ENCODE measurements at regions of chr14 and their contacts with region 1.

Region 1: GRCh38 chr14:88189417-88190191 is 133.5 kb downstream of the KCNK10 start:
- DNase-seq: peak; percentile 41
- H3K4me3 ChIP-seq: no peak overlapping the region
- H3K27me3 ChIP-seq: no peaks in the 10 kb centered on the region
- CTCF ChIP-seq: peak; percentile 76

Region 2: DNA sequence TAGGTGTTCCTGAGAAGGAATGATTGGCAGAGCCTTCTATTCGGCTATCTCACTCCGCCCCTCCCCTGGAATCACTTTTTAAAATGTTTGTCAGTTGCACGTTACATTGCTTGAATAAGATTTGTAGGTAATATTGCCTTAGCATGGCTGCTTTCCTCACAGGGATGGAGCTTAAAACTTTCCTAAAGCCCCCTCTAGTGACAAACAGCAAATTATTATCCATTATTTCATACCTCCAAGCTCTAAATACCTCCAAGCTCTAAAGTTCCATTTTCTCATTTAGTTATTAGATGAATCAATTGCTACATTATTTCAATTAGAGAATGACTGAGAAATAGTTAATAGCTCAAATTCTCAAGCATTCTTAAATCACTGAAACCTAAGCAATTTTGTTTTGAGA is 190.8 kb after region 1 on chr14:
- CTCF ChIA-PET with region 1: interaction called, 12 read pairs
- POLR2A ChIA-PET with region 1: no interaction called
- DNase-seq: no peak
- H3K4me3 ChIP-seq: no peak overlapping the region
- H3K27me3 ChIP-seq: peaks cover 2% of the 10 kb centered on the region; the same call in 1 of the 2 replicates
- CTCF ChIP-seq: no peak

Region 3: GRCh38 chr14:88562831-88563686 is 373.5 kb after region 1 on chr14 and contains the start of gene ZC3H14:
- CTCF ChIA-PET with region 1: interaction called, 14 read pairs
- POLR2A ChIA-PET with region 1: no interaction called
- DNase-seq: no peak
- H3K4me3 ChIP-seq: peak within 1 kb of the TSS; percentile 95
- H3K27me3 ChIP-seq: no peaks in the 10 kb centered on the region
- CTCF ChIP-seq: no peak
- polyA plus RNA-seq, gene ZC3H14: 81.8 and 112 TPM in 2 replicates